Activated T-helper 2 cell treated with anti-CD3 and anti-CD28 coated beads, Interferon-gamma antibody, Interleukin-2, Interleukin-4, amounts not matched to agents 10 μg/mL and 5 μg/mL and 100 μg/mL, durations not matched to agents 14 hours and 24 hours and 36 hours (primary cell): ENCODE measurements at regions of chr16 and their contacts with region 1.

Region 1: GRCh38 chr16:68085259-68086071 is at the start of gene NFATC3:
- DNase-seq: peak; percentile 97
- H3K4me3 Mint-ChIP-seq: peak within 1 kb of the TSS; percentile 89
- H3K27ac Mint-ChIP-seq: peak within 1 kb of the TSS; percentile 95
- H3K4me1 Mint-ChIP-seq: peaks cover 52% of the 10 kb centered on the region
- H3K27me3 Mint-ChIP-seq: no peaks in the 10 kb centered on the region
- total RNA-seq, gene NFATC3: 136 and 146 TPM in 2 replicates

Region 2: GRCh38 chr16:67999985-68000384 is 85.5 kb before region 1 on chr16:
- intact Hi-C with region 1: loop called (anchors 5 kb)
- DNase-seq: no peak
- H3K4me3 Mint-ChIP-seq: peak overlapping the region; percentile 66
- H3K27ac Mint-ChIP-seq: peak overlapping the region; percentile 90
- H3K4me1 Mint-ChIP-seq: peaks cover 37% of the 10 kb centered on the region
- H3K27me3 Mint-ChIP-seq: no peaks in the 10 kb centered on the region

Region 3: DNA sequence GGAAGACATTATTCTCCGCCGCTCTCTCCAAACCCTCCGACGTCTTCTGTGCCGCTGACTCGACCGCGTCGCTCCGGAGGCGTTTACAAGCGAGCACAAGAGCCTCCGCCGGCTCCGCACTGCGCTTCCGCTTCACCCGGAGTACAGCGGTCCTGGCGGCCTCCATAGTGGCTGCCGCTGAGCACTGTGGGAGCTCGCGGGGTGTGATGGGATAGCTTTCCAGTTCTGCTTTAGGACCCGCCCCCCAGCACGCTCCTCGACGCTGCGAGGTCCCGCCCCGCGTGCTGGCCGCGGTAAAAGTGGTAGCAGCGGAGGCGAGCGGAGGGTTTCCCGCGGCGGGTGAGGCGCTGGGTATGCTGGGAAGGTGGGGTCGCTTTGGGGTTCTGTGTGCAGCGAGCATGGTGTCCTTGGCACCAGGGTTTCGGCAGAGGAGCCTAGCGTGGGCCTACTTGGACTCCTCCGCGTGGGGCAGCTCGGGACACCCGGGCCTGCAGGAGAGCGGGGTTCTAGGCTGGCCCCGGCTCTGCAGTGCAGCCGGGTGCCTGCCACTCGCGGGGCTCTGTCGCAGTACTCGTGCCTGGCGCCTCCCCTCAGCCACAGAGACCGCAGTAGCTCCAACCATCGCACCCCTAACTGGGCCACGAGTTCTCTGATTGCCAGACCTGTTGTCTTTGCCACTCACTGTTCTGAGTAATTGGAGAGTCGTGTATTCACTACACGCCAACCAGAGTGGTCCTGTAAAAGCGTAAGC is 225.5 kb after region 1 on chr16 and contains the starts of genes PRMT7 and SLC7A6OS:
- intact Hi-C with region 1: loop called (anchors 10 kb)
- DNase-seq: peak; percentile 93
- H3K4me3 Mint-ChIP-seq: peak within 1 kb of the TSS; percentile 91
- H3K27ac Mint-ChIP-seq: peak within 1 kb of the TSS; percentile 87
- H3K4me1 Mint-ChIP-seq: peaks cover 29% of the 10 kb centered on the region
- H3K27me3 Mint-ChIP-seq: no peaks in the 10 kb centered on the region
- total RNA-seq, gene PRMT7: 80.5 and 90.7 TPM in 2 replicates
- total RNA-seq, gene SLC7A6OS: 24.7 and 26.7 TPM in 2 replicates